ENCODE measurements at regions of chr19 and their contacts with region 1.

Region 1: GRCh38 chr19:35066691-35067563 is 25.4 kb downstream of the HPN start:
- DNase-seq: peak; percentile 79 to 96 (median 89)
- ATAC-seq: peak; percentile 93
- H3K4me3 ChIP-seq: no peak overlapping the region
- H3K4me3 Mint-ChIP-seq: no peak overlapping the region
- H3K27ac ChIP-seq: peak overlapping the region in 1 of 2 experiments; percentile 25
- H3K27ac Mint-ChIP-seq: no peak overlapping the region
- H3K4me1 ChIP-seq: peaks cover 4% of the 10 kb centered on the region
- H3K4me1 Mint-ChIP-seq: peaks cover 4% of the 10 kb centered on the region
- H3K27me3 ChIP-seq: no peaks in the 10 kb centered on the region
- H3K27me3 Mint-ChIP-seq: no peaks in the 10 kb centered on the region
- CTCF ChIP-seq: peak; percentile 76

Region 2: GRCh38 chr19:35055715-35056179 is 11.2 kb before region 1 on chr19:
- CTCF ChIA-PET with region 1: interaction called, 15 read pairs
- POLR2A ChIA-PET with region 1: no interaction called
- intact Hi-C with region 1: no loop called
- DNase-seq: peak in 3 of 9 experiments; percentile 23 to 41 (median 38)
- ATAC-seq: peak; percentile 72
- H3K4me3 ChIP-seq: no peak overlapping the region
- H3K4me3 Mint-ChIP-seq: no peak overlapping the region
- H3K27ac ChIP-seq: no peak overlapping the region
- H3K27ac Mint-ChIP-seq: no peak overlapping the region
- H3K4me1 ChIP-seq: no peaks in the 10 kb centered on the region
- H3K4me1 Mint-ChIP-seq: no peaks in the 10 kb centered on the region
- H3K27me3 ChIP-seq: no peaks in the 10 kb centered on the region
- H3K27me3 Mint-ChIP-seq: no peaks in the 10 kb centered on the region
- CTCF ChIP-seq: peak; percentile 24

Region 3: GRCh38 chr19:35090506-35091237 is 23.7 kb after region 1 on chr19:
- CTCF ChIA-PET with region 1: interaction called, 18 read pairs
- POLR2A ChIA-PET with region 1: no interaction called
- intact Hi-C with region 1: loop called (anchors 1 kb)
- DNase-seq: peak in 7 of 9 experiments; percentile 4 to 72 (median 43)
- ATAC-seq: peak; percentile 84
- H3K4me3 ChIP-seq: no peak overlapping the region
- H3K4me3 Mint-ChIP-seq: no peak overlapping the region
- H3K27ac ChIP-seq: no peak overlapping the region
- H3K27ac Mint-ChIP-seq: no peak overlapping the region
- H3K4me1 ChIP-seq: peaks cover 16% of the 10 kb centered on the region
- H3K4me1 Mint-ChIP-seq: peaks cover 14% of the 10 kb centered on the region
- H3K27me3 ChIP-seq: peaks cover 0 to 2% of the 10 kb centered on the region in 2 experiments
- H3K27me3 Mint-ChIP-seq: peaks cover 4% of the 10 kb centered on the region
- CTCF ChIP-seq: peak; percentile 65

Region 4: DNA sequence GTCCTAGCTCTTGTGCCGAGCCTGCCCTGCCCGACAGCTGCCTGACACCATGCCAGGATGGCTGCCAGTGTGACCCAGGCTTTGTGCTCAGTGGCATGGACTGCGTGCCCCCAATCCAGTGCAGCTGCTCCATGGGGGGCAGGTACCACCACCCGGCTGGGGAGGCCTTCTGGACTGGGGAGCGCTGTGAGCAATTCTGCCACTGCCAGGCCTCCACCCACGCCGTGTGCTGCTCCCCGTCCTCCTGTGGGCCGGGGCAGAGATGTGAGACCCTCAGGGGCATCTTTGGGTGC is 39.3 kb after region 1 on chr19:
- CTCF ChIA-PET with region 1: no interaction called
- POLR2A ChIA-PET with region 1: no interaction called
- intact Hi-C with region 1: no loop called
- DNase-seq: no peak
- ATAC-seq: no peak
- H3K4me3 ChIP-seq: no peak overlapping the region
- H3K4me3 Mint-ChIP-seq: no peak overlapping the region
- H3K27ac ChIP-seq: no peak overlapping the region
- H3K27ac Mint-ChIP-seq: no peak overlapping the region
- H3K4me1 ChIP-seq: no peaks in the 10 kb centered on the region
- H3K4me1 Mint-ChIP-seq: no peaks in the 10 kb centered on the region
- H3K27me3 ChIP-seq: no peaks in the 10 kb centered on the region
- H3K27me3 Mint-ChIP-seq: no peaks in the 10 kb centered on the region
- CTCF ChIP-seq: no peak

Region 5: GRCh38 chr19:35135389-35135909 is 68.5 kb after region 1 on chr19:
- CTCF ChIA-PET with region 1: interaction called, 25 read pairs
- POLR2A ChIA-PET with region 1: no interaction called
- intact Hi-C with region 1: loop called (anchors 1 kb)
- DNase-seq: peak in 7 of 9 experiments; percentile 42 to 74 (median 67)
- ATAC-seq: peak; percentile 94
- H3K4me3 ChIP-seq: no peak overlapping the region
- H3K4me3 Mint-ChIP-seq: no peak overlapping the region
- H3K27ac ChIP-seq: no peak overlapping the region
- H3K27ac Mint-ChIP-seq: no peak overlapping the region
- H3K4me1 ChIP-seq: no peaks in the 10 kb centered on the region
- H3K4me1 Mint-ChIP-seq: peaks cover 6% of the 10 kb centered on the region
- H3K27me3 ChIP-seq: no peaks in the 10 kb centered on the region
- H3K27me3 Mint-ChIP-seq: no peaks in the 10 kb centered on the region
- CTCF ChIP-seq: peak; percentile 48

Region 6: DNA sequence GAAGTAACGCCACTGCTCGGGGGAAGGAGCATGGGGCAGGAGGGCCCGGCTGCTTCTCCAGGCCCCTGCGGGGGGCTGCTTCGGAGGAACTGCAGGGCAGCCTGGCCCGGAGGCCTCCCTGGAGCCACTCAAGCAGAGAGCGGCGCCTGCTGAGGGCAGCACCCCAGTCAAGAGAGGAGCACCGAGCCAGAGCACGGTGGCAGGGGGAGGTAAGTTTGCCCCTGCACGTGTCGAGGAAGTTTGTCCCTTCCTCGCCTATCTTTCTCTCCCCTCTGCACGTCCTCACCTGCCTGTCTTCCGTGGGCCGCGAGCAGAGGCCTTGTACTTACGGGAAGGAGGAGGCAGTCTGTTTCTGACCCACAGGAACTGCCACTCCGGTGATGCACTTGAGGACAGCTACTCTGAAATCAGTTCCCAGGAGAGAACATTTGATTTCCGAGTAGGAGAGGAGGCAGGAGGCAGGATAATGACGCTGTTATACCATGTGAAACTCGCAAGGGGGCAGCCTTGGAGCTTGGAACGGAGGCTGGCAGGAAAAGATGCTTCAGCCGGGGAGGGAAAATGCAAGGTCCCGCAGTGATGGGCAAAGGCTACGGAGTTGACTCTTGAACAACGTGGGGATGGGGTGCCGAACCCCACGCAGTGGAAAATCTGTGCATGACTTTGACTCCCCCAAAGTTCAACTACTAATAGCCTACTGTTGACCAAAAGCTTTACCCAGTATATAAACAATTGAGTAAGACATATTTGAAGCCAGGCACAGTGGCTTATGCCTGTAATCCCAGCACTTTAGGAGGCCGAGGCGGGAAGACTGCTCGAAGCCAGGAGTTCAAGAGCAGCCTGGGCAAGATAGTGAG is 285.7 kb after region 1 on chr19:
- CTCF ChIA-PET with region 1: interaction called, 3 read pairs
- POLR2A ChIA-PET with region 1: no interaction called
- intact Hi-C with region 1: loop called in 1 of 2 experiments (anchors 1 kb)
- DNase-seq: peak; percentile 28 to 85 (median 66)
- ATAC-seq: peak; percentile 94
- H3K4me3 ChIP-seq: no peak overlapping the region
- H3K4me3 Mint-ChIP-seq: no peak overlapping the region
- H3K27ac ChIP-seq: no peak overlapping the region
- H3K27ac Mint-ChIP-seq: peak overlapping the region; percentile 22
- H3K4me1 ChIP-seq: peaks cover 13% of the 10 kb centered on the region
- H3K4me1 Mint-ChIP-seq: peaks cover 9% of the 10 kb centered on the region
- H3K27me3 ChIP-seq: no peaks in the 10 kb centered on the region
- H3K27me3 Mint-ChIP-seq: peaks cover 8% of the 10 kb centered on the region
- CTCF ChIP-seq: peak; percentile 90

Region 7: GRCh38 chr19:35495107-35496064 is 428.5 kb after region 1 on chr19:
- CTCF ChIA-PET with region 1: interaction called, 7 read pairs
- POLR2A ChIA-PET with region 1: no interaction called
- intact Hi-C with region 1: loop called (anchors 1 to 5 kb)
- DNase-seq: peak; percentile 38 to 80 (median 61)
- ATAC-seq: peak; percentile 100
- H3K4me3 ChIP-seq: no peak overlapping the region
- H3K4me3 Mint-ChIP-seq: peak overlapping the region; percentile 22
- H3K27ac ChIP-seq: no peak overlapping the region
- H3K27ac Mint-ChIP-seq: no peak overlapping the region
- H3K4me1 ChIP-seq: no peaks in the 10 kb centered on the region
- H3K4me1 Mint-ChIP-seq: peaks cover 7% of the 10 kb centered on the region
- H3K27me3 ChIP-seq: no peaks in the 10 kb centered on the region
- H3K27me3 Mint-ChIP-seq: peaks cover 8% of the 10 kb centered on the region
- CTCF ChIP-seq: peak; percentile 97